ENCODE measurements at regions of chr5 and their contacts with region 1.

Region 1: DNA sequence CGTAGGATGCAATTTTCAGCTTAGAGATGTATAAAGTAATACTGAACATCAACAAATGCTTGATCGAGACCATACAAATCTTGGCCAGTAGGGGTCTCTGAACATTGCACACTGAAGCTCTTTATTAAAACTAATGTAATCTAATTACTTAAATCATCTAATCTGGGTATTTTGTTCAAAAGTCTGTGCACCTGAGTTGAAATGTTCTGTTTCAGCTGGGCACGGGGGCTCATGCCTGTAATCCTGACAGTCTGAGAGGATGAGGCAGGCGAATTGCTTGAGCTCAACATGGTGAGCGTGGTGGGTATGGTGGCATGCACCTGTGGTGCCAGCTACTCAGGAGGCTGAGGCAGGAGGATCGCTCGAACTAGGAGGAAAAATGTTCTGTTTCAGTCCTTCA is 41.0 kb downstream of the ESM1 start:
- DNase-seq: peak in 8 of 9 experiments; percentile 10 to 77 (median 47)
- ATAC-seq: peak; percentile 49
- H3K4me3 ChIP-seq: no peak overlapping the region
- H3K4me3 Mint-ChIP-seq: no peak overlapping the region
- H3K27ac ChIP-seq: no peak overlapping the region
- H3K27ac Mint-ChIP-seq: no peak overlapping the region
- H3K4me1 ChIP-seq: no peaks in the 10 kb centered on the region
- H3K4me1 Mint-ChIP-seq: no peaks in the 10 kb centered on the region
- H3K27me3 ChIP-seq: no peaks in the 10 kb centered on the region
- H3K27me3 Mint-ChIP-seq: no peaks in the 10 kb centered on the region
- CTCF ChIP-seq: peak; percentile 93

Region 2: GRCh38 chr5:54415896-54416601 is 528.3 kb before region 1 on chr5:
- CTCF ChIA-PET with region 1: no interaction called
- POLR2A ChIA-PET with region 1: no interaction called
- intact Hi-C with region 1: no loop called
- DNase-seq: no peak
- ATAC-seq: no peak
- H3K4me3 ChIP-seq: no peak overlapping the region
- H3K4me3 Mint-ChIP-seq: no peak overlapping the region
- H3K27ac ChIP-seq: no peak overlapping the region
- H3K27ac Mint-ChIP-seq: no peak overlapping the region
- H3K4me1 ChIP-seq: no peaks in the 10 kb centered on the region
- H3K4me1 Mint-ChIP-seq: no peaks in the 10 kb centered on the region
- H3K27me3 ChIP-seq: no peaks in the 10 kb centered on the region
- H3K27me3 Mint-ChIP-seq: no peaks in the 10 kb centered on the region
- CTCF ChIP-seq: no peak

Region 3: GRCh38 chr5:54930736-54931135 is 13.6 kb before region 1 on chr5:
- CTCF ChIA-PET with region 1: interaction called, 23 read pairs
- POLR2A ChIA-PET with region 1: no interaction called
- intact Hi-C with region 1: no loop called
- DNase-seq: no peak
- ATAC-seq: no peak
- H3K4me3 ChIP-seq: no peak overlapping the region
- H3K4me3 Mint-ChIP-seq: no peak overlapping the region
- H3K27ac ChIP-seq: no peak overlapping the region
- H3K27ac Mint-ChIP-seq: no peak overlapping the region
- H3K4me1 ChIP-seq: no peaks in the 10 kb centered on the region
- H3K4me1 Mint-ChIP-seq: no peaks in the 10 kb centered on the region
- H3K27me3 ChIP-seq: no peaks in the 10 kb centered on the region
- H3K27me3 Mint-ChIP-seq: peaks cover 13% of the 10 kb centered on the region
- CTCF ChIP-seq: no peak

Region 4: DNA sequence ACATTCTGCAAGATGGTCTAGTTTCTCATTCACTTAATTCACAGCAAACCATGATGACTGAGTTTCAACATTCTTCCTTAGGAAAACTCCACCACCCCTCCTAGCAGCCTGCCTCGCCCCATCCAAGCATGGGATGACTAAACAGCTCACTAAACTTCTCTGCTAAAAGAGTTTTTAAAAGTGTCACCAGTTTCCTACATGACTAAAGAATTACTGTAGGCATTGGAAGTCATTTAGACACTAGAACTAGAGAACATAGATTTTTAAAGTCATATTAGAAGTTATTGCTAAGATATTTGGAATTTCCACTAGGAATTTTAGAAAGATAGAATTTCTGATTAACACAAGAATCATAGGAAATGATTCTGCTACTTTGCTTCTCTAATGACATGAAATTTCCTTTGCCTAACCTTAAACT is 46.5 kb after region 1 on chr5:
- CTCF ChIA-PET with region 1: interaction called, 14 read pairs
- POLR2A ChIA-PET with region 1: no interaction called
- intact Hi-C with region 1: no loop called
- DNase-seq: no peak
- ATAC-seq: no peak
- H3K4me3 ChIP-seq: no peak overlapping the region
- H3K4me3 Mint-ChIP-seq: no peak overlapping the region
- H3K27ac ChIP-seq: no peak overlapping the region
- H3K27ac Mint-ChIP-seq: no peak overlapping the region
- H3K4me1 ChIP-seq: peaks cover 26% of the 10 kb centered on the region
- H3K4me1 Mint-ChIP-seq: peaks cover 50% of the 10 kb centered on the region
- H3K27me3 ChIP-seq: no peaks in the 10 kb centered on the region
- H3K27me3 Mint-ChIP-seq: no peaks in the 10 kb centered on the region
- CTCF ChIP-seq: no peak

Region 5: GRCh38 chr5:55072666-55073065 is 128.3 kb after region 1 on chr5:
- CTCF ChIA-PET with region 1: interaction called, 10 read pairs
- POLR2A ChIA-PET with region 1: no interaction called
- intact Hi-C with region 1: no loop called
- DNase-seq: peak in 2 of 9 experiments; percentile 53 to 75
- ATAC-seq: peak; percentile 89
- H3K4me3 ChIP-seq: no peak overlapping the region
- H3K4me3 Mint-ChIP-seq: peak overlapping the region; percentile 39
- H3K27ac ChIP-seq: peak overlapping the region; percentile 20 to 65
- H3K27ac Mint-ChIP-seq: peak overlapping the region; percentile 87
- H3K4me1 ChIP-seq: peaks cover 38% of the 10 kb centered on the region
- H3K4me1 Mint-ChIP-seq: peaks cover 39% of the 10 kb centered on the region
- H3K27me3 ChIP-seq: no peaks in the 10 kb centered on the region
- H3K27me3 Mint-ChIP-seq: no peaks in the 10 kb centered on the region
- CTCF ChIP-seq: no peak

Region 6: DNA sequence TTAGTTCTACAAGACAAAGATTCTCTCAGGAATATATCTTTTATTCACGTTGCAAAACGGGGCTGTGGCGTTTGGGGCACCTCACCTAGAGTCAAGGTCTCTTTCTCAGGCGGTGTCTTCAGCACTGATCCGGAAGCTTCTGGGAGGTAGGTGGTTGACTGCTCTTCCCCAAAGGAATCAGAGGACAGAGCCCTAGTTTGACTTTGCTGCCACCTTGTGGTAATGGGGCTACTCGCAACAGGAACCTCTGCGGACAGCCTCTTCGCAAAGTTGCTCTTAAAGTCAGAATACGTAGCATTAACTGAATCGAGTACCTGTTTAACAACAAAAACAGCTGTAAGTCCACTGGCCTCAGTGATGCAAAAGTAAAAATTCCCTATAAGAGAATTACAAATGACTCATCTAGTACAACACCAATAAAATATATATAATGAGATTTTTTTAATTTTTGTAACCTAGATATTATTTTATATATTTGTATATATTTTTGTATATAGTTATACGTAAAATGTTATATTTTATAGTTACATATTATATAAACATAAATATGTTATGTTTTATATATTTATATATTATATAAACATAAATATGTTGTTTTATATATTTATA is 202.3 kb after region 1 on chr5:
- CTCF ChIA-PET with region 1: interaction called, 187 read pairs
- POLR2A ChIA-PET with region 1: interaction called, 6 read pairs
- intact Hi-C with region 1: loop called (anchors 1 kb)
- DNase-seq: peak; percentile 65 to 90 (median 83)
- ATAC-seq: peak; percentile 92
- H3K4me3 ChIP-seq: no peak overlapping the region
- H3K4me3 Mint-ChIP-seq: peak overlapping the region; percentile 30
- H3K27ac ChIP-seq: no peak overlapping the region
- H3K27ac Mint-ChIP-seq: no peak overlapping the region
- H3K4me1 ChIP-seq: peaks cover 15% of the 10 kb centered on the region
- H3K4me1 Mint-ChIP-seq: peaks cover 13% of the 10 kb centered on the region
- H3K27me3 ChIP-seq: no peaks in the 10 kb centered on the region
- H3K27me3 Mint-ChIP-seq: no peaks in the 10 kb centered on the region
- CTCF ChIP-seq: peak; percentile 98

Measured in CD8-positive, alpha-beta T cell (primary cell).